Activated B cell treated with CpG ODN at 0.5 μM for 24 hours (primary cell): ENCODE measurements at regions of chr2 and their contacts with region 1.

Region 1: GRCh38 chr2:197261808-197262226 is 48.8 kb downstream of the ANKRD44 start:
- DNase-seq: no peak
- ATAC-seq: peak; percentile 76
- H3K4me3 Mint-ChIP-seq: peak overlapping the region; percentile 66
- H3K27ac Mint-ChIP-seq: peak overlapping the region; percentile 80
- H3K4me1 Mint-ChIP-seq: peaks cover 84% of the 10 kb centered on the region
- H3K27me3 Mint-ChIP-seq: no peaks in the 10 kb centered on the region
- CTCF ChIP-seq: no peak

Region 2: DNA sequence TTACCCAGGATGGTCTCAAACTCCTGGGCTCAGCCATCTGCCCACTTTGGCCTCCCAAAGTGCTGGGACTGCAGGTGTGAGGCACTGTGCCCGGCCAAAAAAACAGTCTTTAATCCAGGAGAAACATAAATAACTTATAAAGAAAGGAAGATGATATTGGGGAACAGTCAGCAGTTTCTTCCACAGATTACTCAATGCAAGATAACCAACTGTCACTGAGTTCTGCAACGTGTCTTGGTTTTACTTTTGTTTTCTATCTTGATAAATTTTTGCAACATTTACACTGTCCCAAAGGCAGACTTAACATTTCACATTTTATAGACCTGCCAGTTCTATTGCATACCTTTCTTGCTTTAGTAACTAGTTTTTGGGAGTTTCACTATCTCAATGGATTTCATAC is 22.4 kb before region 1 on chr2:
- CTCF ChIA-PET with region 1: no interaction called
- POLR2A ChIA-PET with region 1: interaction called, 12 read pairs
- intact Hi-C with region 1: no loop called
- DNase-seq: no peak
- ATAC-seq: peak; percentile 45
- H3K4me3 Mint-ChIP-seq: peak overlapping the region; percentile 76
- H3K27ac Mint-ChIP-seq: peak overlapping the region; percentile 91
- H3K4me1 Mint-ChIP-seq: peaks cover 87% of the 10 kb centered on the region
- H3K27me3 Mint-ChIP-seq: no peaks in the 10 kb centered on the region
- CTCF ChIP-seq: no peak

Region 3: GRCh38 chr2:197274349-197274748 is 12.5 kb after region 1 on chr2:
- CTCF ChIA-PET with region 1: no interaction called
- POLR2A ChIA-PET with region 1: no interaction called
- intact Hi-C with region 1: loop called (anchors 1 kb)
- DNase-seq: no peak
- ATAC-seq: peak; percentile 51
- H3K4me3 Mint-ChIP-seq: peak overlapping the region; percentile 25
- H3K27ac Mint-ChIP-seq: peak overlapping the region; percentile 78
- H3K4me1 Mint-ChIP-seq: peaks cover 86% of the 10 kb centered on the region
- H3K27me3 Mint-ChIP-seq: no peaks in the 10 kb centered on the region
- CTCF ChIP-seq: no peak